Activated naive CD4-positive, alpha-beta T cell treated with anti-CD3 and anti-CD28 coated beads for 36 hours (primary cell): ENCODE measurements at regions of chr1 and their contacts with region 1.

Region 1: DNA sequence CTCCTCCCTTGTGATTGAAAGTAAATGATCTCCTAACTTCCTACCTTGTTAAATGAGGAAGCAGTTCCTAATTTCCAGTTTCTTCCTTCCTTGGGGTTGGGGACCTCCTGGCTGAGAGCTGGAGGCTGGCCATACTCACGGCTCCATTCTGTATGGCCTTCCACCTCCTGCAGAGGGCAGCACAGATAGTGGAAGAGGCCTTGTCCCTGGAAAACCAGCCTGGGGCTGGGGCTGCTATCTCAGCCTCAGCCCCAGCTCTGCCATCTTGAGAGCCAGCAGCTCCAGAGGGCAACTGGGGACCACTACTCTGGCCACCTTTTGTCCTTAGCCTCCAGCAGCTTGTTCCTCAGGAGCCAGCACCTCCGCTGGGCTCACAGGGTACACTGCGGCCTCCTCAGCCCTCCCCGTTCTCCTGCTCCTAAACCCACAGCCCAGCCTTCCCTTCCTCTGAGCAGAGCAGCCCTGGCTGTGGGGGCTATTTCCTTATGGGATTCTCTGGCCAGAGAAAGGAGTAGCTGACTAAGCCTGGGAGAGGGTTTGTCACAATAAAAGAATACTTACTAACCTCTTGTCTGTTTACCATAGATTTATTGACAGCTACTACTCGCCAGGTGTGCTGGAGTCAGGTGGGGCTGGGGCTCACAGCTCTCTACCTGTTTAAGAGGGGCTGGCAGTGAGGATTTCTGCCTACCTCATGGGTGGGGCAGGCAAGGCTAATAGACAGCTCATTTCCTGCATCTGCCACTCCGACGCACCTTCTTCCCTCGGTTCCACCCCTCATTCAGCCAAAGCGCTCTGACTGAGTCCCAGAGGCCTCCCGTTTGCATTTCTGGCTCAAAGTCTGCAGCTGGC is 6.3 kb downstream of the TMEM234 start:
- DNase-seq: peak; percentile 77
- H3K4me3 Mint-ChIP-seq: no peak overlapping the region
- H3K27ac Mint-ChIP-seq: no peak overlapping the region
- H3K4me1 Mint-ChIP-seq: peaks cover 14% of the 10 kb centered on the region
- H3K27me3 Mint-ChIP-seq: no peaks in the 10 kb centered on the region

Region 2: GRCh38 chr1:32205401-32206370 is 10.2 kb before region 1 on chr1 and contains the start of gene IQCC:
- CTCF ChIA-PET with region 1: interaction called, 27 read pairs
- intact Hi-C with region 1: no loop called
- DNase-seq: peak; percentile 90
- H3K4me3 Mint-ChIP-seq: peak within 1 kb of the TSS; percentile 90
- H3K27ac Mint-ChIP-seq: peak within 1 kb of the TSS; percentile 76
- H3K4me1 Mint-ChIP-seq: peaks cover 26% of the 10 kb centered on the region
- H3K27me3 Mint-ChIP-seq: no peaks in the 10 kb centered on the region
- total RNA-seq, gene IQCC: 4.8 to 5.9 TPM

Region 3: GRCh38 chr1:32256473-32257226 is 40.8 kb after region 1 on chr1:
- CTCF ChIA-PET with region 1: interaction called, 14 read pairs
- intact Hi-C with region 1: no loop called
- DNase-seq: no peak
- H3K4me3 Mint-ChIP-seq: peak overlapping the region; percentile 73
- H3K27ac Mint-ChIP-seq: peak overlapping the region; percentile 96
- H3K4me1 Mint-ChIP-seq: peaks cover 42% of the 10 kb centered on the region
- H3K27me3 Mint-ChIP-seq: no peaks in the 10 kb centered on the region

Region 4: DNA sequence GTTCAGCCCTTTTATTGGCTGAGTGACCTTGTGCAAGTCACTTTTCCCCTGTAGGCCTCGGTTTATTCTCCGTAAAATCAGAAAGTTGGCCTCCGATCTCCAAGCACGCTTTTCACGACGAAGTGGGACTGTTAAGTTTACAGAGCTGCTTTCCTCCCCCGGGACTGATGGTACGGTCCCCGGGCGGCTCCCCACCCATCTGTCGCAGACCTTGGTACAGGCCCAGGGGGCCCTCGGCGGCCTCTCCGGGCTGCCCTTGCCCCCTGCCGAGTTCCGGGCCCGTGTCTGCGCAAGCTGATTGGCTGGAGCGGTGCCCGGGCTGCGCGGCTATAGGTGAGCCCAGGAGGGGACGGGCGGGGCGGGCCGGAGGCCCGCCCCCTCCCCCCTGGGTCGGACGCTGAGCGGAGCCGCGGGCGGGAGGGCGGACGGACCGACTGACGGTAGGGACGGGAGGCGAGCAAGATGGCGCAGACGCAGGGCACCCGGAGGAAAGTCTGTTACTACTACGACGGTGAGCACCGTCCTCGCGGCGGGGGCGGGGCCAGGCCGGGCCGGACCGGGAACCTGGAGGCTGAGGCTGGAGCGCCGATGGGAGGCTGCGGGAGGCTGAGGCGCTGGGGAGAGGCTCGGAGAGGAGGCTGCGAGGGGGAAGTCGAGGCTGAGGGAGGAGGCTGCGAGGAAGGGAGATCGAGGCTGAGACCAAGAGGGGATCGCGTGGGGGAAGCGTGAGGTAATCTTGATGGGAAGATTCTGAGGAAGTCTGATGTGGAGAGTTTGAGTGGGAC is 76.0 kb after region 1 on chr1 and contains the start of gene HDAC1:
- CTCF ChIA-PET with region 1: interaction called, 18 read pairs
- intact Hi-C with region 1: loop called (anchors 1 kb)
- DNase-seq: peak; percentile 97
- H3K4me3 Mint-ChIP-seq: peak within 1 kb of the TSS; percentile 100
- H3K27ac Mint-ChIP-seq: peak within 1 kb of the TSS; percentile 98
- H3K4me1 Mint-ChIP-seq: peaks cover 48% of the 10 kb centered on the region
- H3K27me3 Mint-ChIP-seq: no peaks in the 10 kb centered on the region
- total RNA-seq, gene HDAC1: 111 to 120 TPM

Region 5: DNA sequence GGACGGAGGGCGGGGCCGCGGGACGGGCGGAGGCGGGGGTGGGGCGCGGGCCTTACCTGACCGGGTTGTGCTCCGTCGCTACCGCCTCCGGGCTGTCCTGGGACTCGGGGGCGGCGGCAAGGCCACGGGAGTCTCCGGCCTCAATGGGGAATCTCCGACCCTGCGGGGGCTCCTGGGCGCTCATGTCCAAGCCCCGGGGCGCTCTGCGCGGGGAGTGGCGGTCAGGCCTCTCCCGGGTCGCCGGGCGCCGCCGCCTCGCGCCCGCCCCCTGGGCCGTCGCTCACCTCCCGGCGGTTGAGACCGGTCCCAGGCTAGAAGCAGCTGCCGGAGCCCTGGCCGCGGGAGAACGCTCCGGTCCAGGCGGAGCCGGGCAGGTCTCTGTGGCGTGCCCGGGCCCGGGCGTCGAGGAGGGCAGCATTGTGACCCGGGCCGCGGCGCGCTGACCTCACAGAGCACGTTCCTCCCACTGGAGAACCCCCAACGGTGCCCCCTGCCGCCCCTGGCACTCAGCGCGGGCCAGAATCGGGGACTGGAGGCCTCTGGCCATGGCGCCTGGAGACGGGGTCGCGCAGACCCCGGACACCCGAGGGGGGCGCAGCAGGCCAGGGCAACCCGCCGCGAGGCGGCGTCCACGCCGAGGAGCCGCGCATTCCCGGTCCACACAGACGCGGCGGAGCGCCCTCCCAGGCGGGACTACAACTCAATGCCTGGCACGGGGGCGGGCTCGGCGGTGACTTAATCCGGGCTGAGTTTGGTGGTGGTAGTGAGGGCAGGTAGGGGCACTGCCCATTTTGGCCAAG is 146.0 kb after region 1 on chr1:
- CTCF ChIA-PET with region 1: interaction called, 3 read pairs
- intact Hi-C with region 1: loop called (anchors 5 kb)
- DNase-seq: peak; percentile 55
- H3K4me3 Mint-ChIP-seq: peak overlapping the region; percentile 25
- H3K27ac Mint-ChIP-seq: no peak overlapping the region
- H3K4me1 Mint-ChIP-seq: peaks cover 21% of the 10 kb centered on the region
- H3K27me3 Mint-ChIP-seq: no peaks in the 10 kb centered on the region

Region 6: DNA sequence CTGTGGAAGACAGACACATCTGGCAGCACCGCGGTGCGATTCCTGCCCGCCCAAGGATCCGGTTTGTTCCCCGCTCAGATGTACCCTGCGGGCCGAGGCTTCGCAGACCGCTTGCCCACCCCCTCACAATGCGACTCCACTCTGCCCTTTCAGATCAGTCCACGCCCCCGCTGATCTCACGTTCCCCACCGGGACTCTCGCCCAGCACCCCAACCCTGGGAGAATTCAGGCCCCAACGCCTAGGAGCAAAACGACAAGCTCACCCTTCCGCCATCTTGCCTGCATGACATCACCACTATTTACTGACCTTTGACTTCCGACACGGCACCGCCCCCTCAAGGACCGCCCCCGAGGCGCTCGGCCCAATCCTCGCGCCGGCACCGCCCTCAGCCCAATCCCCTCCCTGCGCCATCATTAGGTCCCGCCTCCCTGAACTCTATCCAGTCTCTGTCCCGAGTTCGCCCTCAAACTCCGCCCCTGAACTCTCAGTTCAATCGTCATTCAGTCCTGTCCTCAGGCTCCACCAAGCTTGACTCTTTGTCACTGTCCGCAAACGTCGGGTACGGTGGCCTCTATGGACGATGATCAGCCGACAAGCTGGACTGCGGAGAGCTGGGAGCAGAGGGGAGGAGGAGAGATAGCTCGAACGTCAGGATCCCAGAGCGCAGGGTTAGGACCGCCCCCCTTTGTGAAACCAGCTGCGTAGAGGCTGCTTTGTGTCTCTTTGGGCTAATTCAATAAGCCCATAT is 178.5 kb after region 1 on chr1 and contains the start of gene BSDC1:
- CTCF ChIA-PET with region 1: interaction called, 11 read pairs
- intact Hi-C with region 1: no loop called
- DNase-seq: peak; percentile 100
- H3K4me3 Mint-ChIP-seq: peak within 1 kb of the TSS; percentile 100
- H3K27ac Mint-ChIP-seq: peak within 1 kb of the TSS; percentile 99
- H3K4me1 Mint-ChIP-seq: peaks cover 31% of the 10 kb centered on the region
- H3K27me3 Mint-ChIP-seq: no peaks in the 10 kb centered on the region
- total RNA-seq, gene BSDC1: 35.2 to 38.3 TPM